ENCODE measurements at regions of chrX and their contacts with region 1.

Region 1: GRCh38 chrX:23797371-23798128 is 14.6 kb downstream of the SAT1 start:
- DNase-seq: no peak
- H3K4me3 ChIP-seq: no peak overlapping the region
- H3K4me3 Mint-ChIP-seq: no peak overlapping the region
- H3K27ac ChIP-seq: no peak overlapping the region
- H3K27ac Mint-ChIP-seq: no peak overlapping the region
- H3K4me1 ChIP-seq: peaks cover 4 to 5% of the 10 kb centered on the region in 2 donors
- H3K4me1 Mint-ChIP-seq: peaks cover 9% of the 10 kb centered on the region
- H3K27me3 ChIP-seq: no peaks in the 10 kb centered on the region
- H3K27me3 Mint-ChIP-seq: peaks cover 0 to 3% (median 0%) of the 10 kb centered on the region in 3 donors
- CTCF ChIP-seq: no peak

Region 2: DNA sequence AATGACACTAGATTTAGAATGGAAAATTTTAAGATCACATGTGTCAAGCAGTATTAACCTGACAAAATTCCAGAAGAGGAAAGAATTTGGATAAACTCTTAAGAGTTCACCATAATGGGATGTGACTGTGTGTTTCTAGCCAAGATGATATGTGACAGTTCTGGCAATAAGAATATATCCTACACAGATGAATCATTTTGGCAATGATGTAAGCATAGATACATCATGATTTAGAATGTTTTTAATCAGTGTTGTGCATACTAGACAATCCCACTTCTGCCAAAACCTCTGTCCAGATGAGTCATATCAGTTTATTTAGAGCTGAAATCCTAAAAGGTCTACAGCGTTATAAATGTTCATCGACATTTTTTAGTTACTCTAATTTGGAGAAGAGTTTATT is 414.1 kb before region 1 on chrX:
- intact Hi-C with region 1: no loop called
- DNase-seq: no peak
- H3K4me3 ChIP-seq: no peak overlapping the region
- H3K4me3 Mint-ChIP-seq: no peak overlapping the region
- H3K27ac ChIP-seq: no peak overlapping the region
- H3K27ac Mint-ChIP-seq: no peak overlapping the region
- H3K4me1 ChIP-seq: no peaks in the 10 kb centered on the region
- H3K4me1 Mint-ChIP-seq: peaks cover 6% of the 10 kb centered on the region
- H3K27me3 ChIP-seq: peaks cover 0 to 4% of the 10 kb centered on the region in 2 donors
- H3K27me3 Mint-ChIP-seq: peaks cover 0 to 9% (median 1%) of the 10 kb centered on the region in 3 donors
- CTCF ChIP-seq: no peak

Region 3: DNA sequence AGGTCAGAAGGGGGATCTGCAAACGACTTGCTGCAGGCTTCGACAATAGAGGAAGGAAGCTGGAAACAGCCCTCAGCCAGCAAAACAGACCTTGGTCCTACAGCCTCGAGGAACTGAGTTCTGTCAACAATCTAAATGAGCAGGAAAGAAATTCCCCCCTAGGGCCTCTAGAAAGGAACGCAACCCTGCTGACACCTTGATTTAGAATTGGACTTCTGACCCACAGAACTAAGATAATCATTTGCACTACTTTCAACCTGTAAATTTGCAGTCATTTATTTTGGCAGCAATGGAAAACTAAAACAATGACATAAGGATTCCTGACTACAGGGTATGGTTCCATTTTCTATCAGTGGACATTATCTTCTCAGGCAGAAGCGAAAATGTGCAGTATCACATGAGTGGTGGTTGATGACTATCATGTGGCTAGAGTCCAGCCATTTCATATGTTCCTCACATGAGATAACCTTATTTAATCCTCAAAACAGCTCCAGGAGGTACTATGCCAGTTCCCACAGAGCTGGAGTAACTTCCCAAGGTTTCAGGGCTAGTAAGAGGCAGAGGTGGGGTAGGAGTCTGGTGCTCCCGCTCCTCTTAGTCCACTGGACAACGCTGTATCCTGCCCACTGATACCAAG is 47.1 kb after region 1 on chrX:
- intact Hi-C with region 1: loop called in 1 of 2 experiments (anchors 10 kb)
- DNase-seq: peak; percentile 27 to 58 (median 41)
- H3K4me3 ChIP-seq: peak overlapping the region in 1 of 3 experiments; percentile 25
- H3K4me3 Mint-ChIP-seq: peak overlapping the region; percentile 31 to 42
- H3K27ac ChIP-seq: peak overlapping the region; percentile 82 to 86
- H3K27ac Mint-ChIP-seq: peak overlapping the region; percentile 64 to 92 (median 83)
- H3K4me1 ChIP-seq: peaks cover 41 to 43% of the 10 kb centered on the region in 2 donors
- H3K4me1 Mint-ChIP-seq: peaks cover 36% of the 10 kb centered on the region
- H3K27me3 ChIP-seq: peaks cover 0 to 2% of the 10 kb centered on the region in 2 donors
- H3K27me3 Mint-ChIP-seq: peaks cover 0 to 22% (median 0%) of the 10 kb centered on the region in 3 donors
- CTCF ChIP-seq: no peak